ENCODE measurements at regions of chr2 and their contacts with region 1.

Region 1: DNA sequence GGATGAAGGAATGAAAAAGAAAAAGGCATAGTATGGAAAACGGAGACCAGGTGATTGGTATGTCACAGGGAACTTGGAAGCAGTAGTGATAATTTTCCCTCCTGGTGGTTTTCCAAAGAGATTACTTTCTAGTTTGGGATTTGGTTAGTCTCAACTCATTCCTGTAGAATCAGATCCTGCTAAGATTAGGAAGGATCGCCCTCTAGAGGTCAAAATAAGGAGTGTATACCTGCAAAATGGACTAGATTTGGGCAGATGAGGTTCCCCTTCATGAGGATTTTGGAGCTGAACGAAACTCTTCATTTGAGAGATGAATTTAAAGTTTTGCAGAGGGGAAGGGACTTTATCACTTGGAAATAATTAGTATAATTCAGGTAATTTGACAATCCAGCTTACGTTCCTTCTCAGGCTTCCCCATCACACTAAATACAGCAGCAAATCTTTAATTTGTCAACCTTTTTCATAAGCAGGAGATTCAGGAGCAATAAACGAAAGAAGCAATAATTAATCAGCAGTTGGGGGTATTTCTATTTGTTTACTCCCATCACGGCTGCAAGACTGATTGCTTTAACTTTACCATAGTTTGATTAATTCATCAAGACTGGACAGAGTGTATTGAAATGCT is 65.2 kb downstream of the CCDC195 start:
- DNase-seq: peak in 7 of 9 donors; percentile 12 to 57 (median 47)
- ATAC-seq: peak; percentile 72
- H3K4me3 ChIP-seq: no peak overlapping the region
- H3K4me3 Mint-ChIP-seq: no peak overlapping the region
- H3K27ac ChIP-seq: no peak overlapping the region
- H3K27ac Mint-ChIP-seq: no peak overlapping the region
- H3K4me1 ChIP-seq: no peaks in the 10 kb centered on the region
- H3K4me1 Mint-ChIP-seq: peaks cover 0 to 11% (median 5%) of the 10 kb centered on the region in 7 donors
- H3K27me3 ChIP-seq: no peaks in the 10 kb centered on the region
- H3K27me3 Mint-ChIP-seq: peaks cover 0 to 7% (median 0%) of the 10 kb centered on the region in 5 donors

Region 2: GRCh38 chr2:223970343-223971128 is 680.4 kb before region 1 on chr2:
- CTCF ChIA-PET with region 1: interaction called, 5 read pairs
- POLR2A ChIA-PET with region 1: no interaction called
- intact Hi-C with region 1: loop called (anchors 2 kb)
- DNase-seq: peak in 8 of 9 donors; percentile 27 to 62 (median 54)
- ATAC-seq: peak; percentile 87
- H3K4me3 ChIP-seq: no peak overlapping the region
- H3K4me3 Mint-ChIP-seq: no peak overlapping the region
- H3K27ac ChIP-seq: no peak overlapping the region
- H3K27ac Mint-ChIP-seq: peak overlapping the region in 1 of 9 donors; percentile 28
- H3K4me1 ChIP-seq: no peaks in the 10 kb centered on the region
- H3K4me1 Mint-ChIP-seq: peaks cover 0 to 14% (median 4%) of the 10 kb centered on the region in 7 donors
- H3K27me3 ChIP-seq: no peaks in the 10 kb centered on the region
- H3K27me3 Mint-ChIP-seq: no peaks in the 10 kb centered on the region

Region 3: DNA sequence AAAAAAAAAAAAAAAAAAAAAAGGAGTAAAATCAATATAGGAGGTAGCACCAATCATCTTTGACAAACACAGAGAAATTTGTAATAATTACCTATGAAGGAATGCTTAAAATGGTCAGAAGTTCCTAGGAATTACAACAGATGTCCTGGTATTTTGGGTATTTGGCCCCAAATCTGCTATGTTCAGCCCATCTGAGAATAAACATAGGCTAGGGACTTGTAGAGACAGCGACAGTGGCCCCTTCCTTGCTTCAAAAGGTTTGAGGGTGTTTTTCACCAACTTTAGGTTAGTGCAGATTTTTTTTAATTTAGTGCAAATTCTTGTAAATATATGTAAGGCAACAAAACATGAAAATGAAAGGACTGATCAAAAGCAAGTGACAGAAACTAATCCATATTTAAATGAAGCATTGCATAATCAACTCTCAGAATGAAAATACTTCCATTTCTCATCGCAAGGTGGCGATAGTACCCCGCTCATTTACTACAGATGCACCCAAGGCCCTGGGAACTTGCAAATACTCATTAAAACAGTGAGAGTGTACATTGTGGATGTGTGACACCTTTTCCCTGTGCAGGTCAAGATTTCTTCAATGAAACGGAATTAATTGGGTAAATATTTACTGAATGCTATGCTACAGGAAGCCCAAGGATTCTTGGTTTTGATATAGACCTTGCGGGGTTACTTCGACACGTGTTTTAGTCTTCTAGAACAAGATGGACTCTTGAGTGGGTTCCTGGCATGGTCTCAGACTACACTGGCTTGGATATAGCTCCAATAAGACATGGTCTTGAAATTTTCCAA is 293.6 kb before region 1 on chr2:
- CTCF ChIA-PET with region 1: interaction called, 11 read pairs
- POLR2A ChIA-PET with region 1: no interaction called
- intact Hi-C with region 1: loop called (anchors 1 kb)
- DNase-seq: peak; percentile 19 to 68 (median 59)
- ATAC-seq: peak; percentile 82
- H3K4me3 ChIP-seq: no peak overlapping the region
- H3K4me3 Mint-ChIP-seq: no peak overlapping the region
- H3K27ac ChIP-seq: no peak overlapping the region
- H3K27ac Mint-ChIP-seq: no peak overlapping the region
- H3K4me1 ChIP-seq: no peaks in the 10 kb centered on the region
- H3K4me1 Mint-ChIP-seq: peaks cover 0 to 2% (median 0%) of the 10 kb centered on the region in 7 donors
- H3K27me3 ChIP-seq: no peaks in the 10 kb centered on the region
- H3K27me3 Mint-ChIP-seq: peaks cover 8 to 20% (median 9%) of the 10 kb centered on the region in 5 donors

Region 4: DNA sequence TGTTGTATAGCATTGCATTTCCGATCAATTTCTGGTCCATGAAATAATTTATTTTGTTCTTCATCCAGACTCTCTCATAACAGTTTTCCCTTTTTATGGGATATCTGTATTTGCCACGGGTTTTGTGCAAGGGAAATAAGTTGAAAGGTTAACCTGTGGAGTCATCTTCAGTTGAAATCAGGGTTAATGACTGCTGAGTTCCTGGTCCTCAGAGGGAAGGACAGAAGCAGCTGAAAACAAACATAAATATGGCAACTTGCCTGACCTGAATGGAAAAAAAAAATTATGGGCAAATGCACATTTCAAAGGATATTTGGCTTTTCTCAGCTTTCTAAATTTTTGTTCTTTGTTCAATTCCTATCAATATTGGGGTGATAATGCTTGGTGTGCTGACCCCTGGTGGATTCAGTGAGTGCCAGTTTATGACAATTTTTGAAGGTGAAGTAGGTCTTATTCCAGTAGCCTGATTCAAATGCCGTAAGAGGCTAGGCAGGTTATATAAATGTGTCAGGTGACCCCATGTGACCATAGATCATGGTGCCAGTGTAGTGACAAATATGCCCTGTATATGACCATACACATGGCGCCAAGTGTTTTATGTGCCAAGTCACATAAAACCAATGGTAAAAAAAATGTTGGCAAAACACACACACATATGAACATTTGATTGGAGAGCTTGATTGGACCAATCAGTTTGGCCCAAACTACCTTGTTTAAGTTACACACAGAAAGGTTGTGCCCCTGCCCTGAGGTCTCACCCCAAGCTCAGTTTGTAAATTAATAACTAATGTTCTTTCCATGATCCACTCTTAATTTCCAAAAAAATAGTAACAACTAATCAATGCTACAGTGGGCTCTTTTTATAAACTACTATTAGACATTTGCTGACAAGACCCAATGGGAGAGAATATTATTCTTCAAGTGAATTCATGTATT is 201.4 kb before region 1 on chr2:
- CTCF ChIA-PET with region 1: interaction called, 5 read pairs
- POLR2A ChIA-PET with region 1: no interaction called
- intact Hi-C with region 1: loop called in 1 of 2 experiments (anchors 10 kb)
- DNase-seq: peak in 2 of 9 donors; percentile 10 to 15
- ATAC-seq: peak; percentile 61
- H3K4me3 ChIP-seq: no peak overlapping the region
- H3K4me3 Mint-ChIP-seq: no peak overlapping the region
- H3K27ac ChIP-seq: no peak overlapping the region
- H3K27ac Mint-ChIP-seq: no peak overlapping the region
- H3K4me1 ChIP-seq: no peaks in the 10 kb centered on the region
- H3K4me1 Mint-ChIP-seq: no peaks in the 10 kb centered on the region
- H3K27me3 ChIP-seq: no peaks in the 10 kb centered on the region
- H3K27me3 Mint-ChIP-seq: peaks cover 4 to 24% (median 8%) of the 10 kb centered on the region in 5 donors

Region 5: DNA sequence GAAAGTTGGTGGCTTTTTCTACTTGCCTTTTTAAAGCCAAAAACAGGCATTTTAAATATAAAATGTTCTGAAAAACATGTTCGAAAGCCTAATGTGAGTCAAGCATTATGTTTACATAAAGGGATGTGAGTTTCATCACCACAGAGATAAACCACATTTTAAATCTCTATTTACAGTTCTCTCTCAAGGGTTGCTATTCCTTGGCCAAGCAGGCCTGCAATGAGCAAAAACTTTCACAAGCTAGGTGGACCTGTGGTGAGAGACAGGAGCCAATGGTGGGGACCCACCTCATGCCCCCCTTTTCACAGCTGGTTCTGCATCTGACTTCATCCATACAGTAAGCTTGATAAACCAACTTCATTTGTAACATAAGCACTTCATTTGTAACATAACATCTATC is 130.9 kb before region 1 on chr2:
- CTCF ChIA-PET with region 1: interaction called, 4 read pairs
- POLR2A ChIA-PET with region 1: no interaction called
- intact Hi-C with region 1: loop called in 1 of 2 experiments (anchors 10 kb)
- DNase-seq: peak in 2 of 9 donors; percentile 2 to 29
- ATAC-seq: peak; percentile 33
- H3K4me3 ChIP-seq: no peak overlapping the region
- H3K4me3 Mint-ChIP-seq: peak overlapping the region in 9 of 10 donors; percentile 11 to 64 (median 32)
- H3K27ac ChIP-seq: no peak overlapping the region
- H3K27ac Mint-ChIP-seq: peak overlapping the region in 7 of 9 donors; percentile 3 to 76 (median 23)
- H3K4me1 ChIP-seq: peaks cover 33 to 35% of the 10 kb centered on the region in 2 donors
- H3K4me1 Mint-ChIP-seq: peaks cover 56 to 72% (median 63%) of the 10 kb centered on the region in 7 donors
- H3K27me3 ChIP-seq: no peaks in the 10 kb centered on the region
- H3K27me3 Mint-ChIP-seq: no peaks in the 10 kb centered on the region

Region 6: DNA sequence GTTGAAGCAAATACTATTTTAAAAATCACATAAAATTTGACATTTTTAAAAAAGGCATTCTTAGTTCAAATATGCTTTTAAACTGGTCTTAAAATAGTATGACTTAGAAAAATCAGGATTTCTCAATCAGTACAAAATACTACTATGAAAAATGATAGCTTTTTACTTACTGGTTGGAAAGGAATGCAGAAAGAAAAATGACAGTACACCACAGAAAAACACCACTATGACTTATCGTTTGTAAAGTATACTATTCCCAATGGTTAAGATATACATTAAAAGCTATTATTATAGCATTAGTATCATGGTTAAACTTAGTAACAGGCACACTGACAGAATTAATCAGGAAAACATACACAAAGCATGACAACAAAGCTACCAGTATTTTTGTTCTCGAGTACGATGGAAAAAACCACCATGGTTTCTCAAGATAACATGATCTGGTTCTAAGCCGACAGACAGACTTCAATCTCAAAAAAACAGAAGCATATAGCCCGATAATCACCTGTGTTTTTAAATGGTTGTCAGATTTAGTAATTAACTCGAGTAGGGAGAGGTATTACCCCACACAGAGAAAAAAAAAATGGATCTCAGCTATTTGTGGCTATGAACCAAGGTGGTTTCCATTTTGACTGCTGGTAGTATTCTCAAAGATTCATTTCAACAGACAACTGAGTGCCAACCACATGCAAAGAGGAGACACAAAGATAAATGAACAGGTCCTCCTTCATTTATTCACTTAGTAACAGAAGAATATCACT is 104.9 kb before region 1 on chr2:
- CTCF ChIA-PET with region 1: no interaction called
- POLR2A ChIA-PET with region 1: no interaction called
- intact Hi-C with region 1: no loop called
- DNase-seq: no peak
- ATAC-seq: peak; percentile 44
- H3K4me3 ChIP-seq: no peak overlapping the region
- H3K4me3 Mint-ChIP-seq: peak overlapping the region in 1 of 10 donors; percentile 40
- H3K27ac ChIP-seq: no peak overlapping the region
- H3K27ac Mint-ChIP-seq: peak overlapping the region in 6 of 9 donors; percentile 1 to 65 (median 52)
- H3K4me1 ChIP-seq: peaks cover 5 to 19% of the 10 kb centered on the region in 2 donors
- H3K4me1 Mint-ChIP-seq: peaks cover 23 to 86% (median 68%) of the 10 kb centered on the region in 7 donors
- H3K27me3 ChIP-seq: no peaks in the 10 kb centered on the region
- H3K27me3 Mint-ChIP-seq: no peaks in the 10 kb centered on the region

Region 7: GRCh38 chr2:224611938-224612337 is 39.0 kb before region 1 on chr2:
- CTCF ChIA-PET with region 1: interaction called, 4 read pairs
- POLR2A ChIA-PET with region 1: interaction called, 3 read pairs
- intact Hi-C with region 1: loop called in 1 of 2 experiments (anchors 5 kb)
- DNase-seq: no peak
- ATAC-seq: no peak
- H3K4me3 ChIP-seq: no peak overlapping the region
- H3K4me3 Mint-ChIP-seq: no peak overlapping the region
- H3K27ac ChIP-seq: no peak overlapping the region
- H3K27ac Mint-ChIP-seq: no peak overlapping the region
- H3K4me1 ChIP-seq: no peaks in the 10 kb centered on the region
- H3K4me1 Mint-ChIP-seq: peaks cover 0 to 3% (median 0%) of the 10 kb centered on the region in 7 donors
- H3K27me3 ChIP-seq: no peaks in the 10 kb centered on the region
- H3K27me3 Mint-ChIP-seq: peaks cover 0 to 12% (median 5%) of the 10 kb centered on the region in 5 donors

Region 8: GRCh38 chr2:225660262-225661131 is 1009.6 kb after region 1 on chr2:
- CTCF ChIA-PET with region 1: no interaction called
- POLR2A ChIA-PET with region 1: no interaction called
- intact Hi-C with region 1: loop called (anchors 1 to 10 kb)
- DNase-seq: peak; percentile 37 to 71 (median 60)
- ATAC-seq: peak; percentile 83
- H3K4me3 ChIP-seq: no peak overlapping the region
- H3K4me3 Mint-ChIP-seq: no peak overlapping the region
- H3K27ac ChIP-seq: no peak overlapping the region
- H3K27ac Mint-ChIP-seq: no peak overlapping the region
- H3K4me1 ChIP-seq: no peaks in the 10 kb centered on the region
- H3K4me1 Mint-ChIP-seq: no peaks in the 10 kb centered on the region
- H3K27me3 ChIP-seq: peaks cover 0 to 2% of the 10 kb centered on the region in 2 donors
- H3K27me3 Mint-ChIP-seq: peaks cover 15 to 23% (median 20%) of the 10 kb centered on the region in 5 donors